Esophagus muscularis mucosa (tissue), 4 donors: ENCODE measurements at regions of chr5 and their contacts with region 1.

Region 1: GRCh38 chr5:111550279-111551020 is 38.1 kb upstream of the STARD4 start:
- DNase-seq: peak; percentile 94
- H3K4me3 ChIP-seq: no peak overlapping the region
- H3K27ac ChIP-seq: peak overlapping the region; percentile 33 to 71 (median 46)
- H3K4me1 ChIP-seq: peaks cover 7 to 21% (median 13%) of the 10 kb centered on the region in 4 donors
- H3K27me3 ChIP-seq: no peaks in the 10 kb centered on the region
- CTCF ChIP-seq: peak; percentile 70 to 72 (median 72)
- EP300 ChIP-seq: no peak
- POLR2A ChIP-seq: no peak

Region 2: GRCh38 chr5:111680737-111681413 is 130.4 kb after region 1 on chr5:
- intact Hi-C with region 1: loop called (anchors 10 kb)
- DNase-seq: peak; percentile 93
- H3K4me3 ChIP-seq: peak overlapping the region in 1 of 4 donors; percentile 4
- H3K27ac ChIP-seq: peak overlapping the region; percentile 41 to 67 (median 58)
- H3K4me1 ChIP-seq: peaks cover 14 to 21% (median 18%) of the 10 kb centered on the region in 4 donors
- H3K27me3 ChIP-seq: no peaks in the 10 kb centered on the region
- CTCF ChIP-seq: no peak
- EP300 ChIP-seq: no peak
- POLR2A ChIP-seq: no peak

Region 3: DNA sequence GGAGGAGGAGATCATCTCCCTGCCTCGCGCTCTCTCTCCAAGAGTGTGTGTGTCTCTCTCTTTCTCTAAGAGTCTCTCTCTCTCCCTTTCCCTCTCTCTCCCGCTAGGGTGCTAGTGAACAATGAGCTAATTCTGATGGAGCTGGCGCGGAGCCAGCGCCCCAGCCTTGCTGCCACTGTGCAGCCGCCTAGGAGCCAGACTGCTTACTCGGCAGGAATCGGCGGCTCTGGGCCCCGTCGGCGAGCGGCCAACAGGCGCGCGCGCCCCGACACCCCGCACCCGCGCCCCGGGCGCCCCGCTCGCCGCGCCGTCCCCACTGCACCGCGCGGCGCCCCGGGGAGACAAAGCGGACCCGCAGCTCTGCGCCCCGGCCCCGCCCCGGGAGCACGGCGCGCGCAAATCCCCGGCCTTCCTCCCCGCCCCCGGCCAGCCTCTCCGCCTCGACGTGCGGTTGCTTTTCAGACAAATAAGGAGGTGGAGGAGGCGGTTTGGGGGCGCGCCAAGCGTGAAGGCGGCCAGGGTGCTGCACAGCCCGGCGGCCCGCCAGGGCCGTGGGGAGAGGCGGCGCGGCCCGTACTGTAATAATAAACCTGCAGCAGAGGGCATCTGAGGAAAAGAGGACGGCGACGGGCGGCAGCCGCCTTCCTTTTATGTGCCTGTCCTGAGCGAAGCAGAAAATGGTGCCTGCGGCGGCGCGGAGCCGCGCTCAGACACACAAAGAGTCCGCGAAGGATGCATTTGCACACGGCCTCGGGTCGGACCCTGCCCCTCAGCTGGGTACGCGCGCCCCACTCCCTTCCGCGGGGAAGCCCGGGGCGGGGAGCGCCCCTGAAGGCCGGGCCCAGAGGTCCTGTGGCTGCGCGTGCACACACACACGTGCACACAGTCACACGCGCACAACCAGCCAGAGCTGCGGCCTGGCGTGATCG is 207.2 kb after region 1 on chr5:
- intact Hi-C with region 1: loop called (anchors 5 kb)
- DNase-seq: peak; percentile 97
- H3K4me3 ChIP-seq: peak overlapping the region; percentile 65 to 71 (median 68)
- H3K27ac ChIP-seq: peak overlapping the region; percentile 88 to 94 (median 90)
- H3K4me1 ChIP-seq: peaks cover 23 to 43% (median 39%) of the 10 kb centered on the region in 4 donors
- H3K27me3 ChIP-seq: no peaks in the 10 kb centered on the region
- CTCF ChIP-seq: peak in 2 of 3 experiments; percentile 14 to 57
- EP300 ChIP-seq: no peak
- POLR2A ChIP-seq: no peak

Region 4: DNA sequence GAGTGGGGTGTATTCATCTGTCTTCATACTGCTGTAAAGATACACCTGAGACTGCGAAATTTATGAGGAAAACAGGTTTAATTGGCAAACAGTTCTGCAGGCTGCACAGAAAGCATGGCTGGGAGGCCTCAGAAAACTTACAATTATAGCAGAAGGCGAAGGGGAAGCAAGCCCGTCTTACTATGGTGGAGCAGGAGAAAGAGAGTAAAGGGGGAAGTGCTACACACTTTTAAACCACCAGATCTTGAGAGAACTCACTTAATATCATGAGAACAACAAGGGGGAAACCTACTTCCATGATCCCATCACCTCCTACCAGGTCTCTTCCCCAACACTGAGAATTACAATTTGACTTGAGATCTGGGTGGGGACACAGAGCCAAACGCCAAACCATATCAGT is 219.1 kb after region 1 on chr5:
- intact Hi-C with region 1: no loop called
- DNase-seq: no peak
- H3K4me3 ChIP-seq: no peak overlapping the region
- H3K27ac ChIP-seq: no peak overlapping the region
- H3K4me1 ChIP-seq: peaks cover 4 to 9% (median 7%) of the 10 kb centered on the region in 4 donors
- H3K27me3 ChIP-seq: no peaks in the 10 kb centered on the region
- CTCF ChIP-seq: no peak
- EP300 ChIP-seq: no peak
- POLR2A ChIP-seq: no peak

Region 5: DNA sequence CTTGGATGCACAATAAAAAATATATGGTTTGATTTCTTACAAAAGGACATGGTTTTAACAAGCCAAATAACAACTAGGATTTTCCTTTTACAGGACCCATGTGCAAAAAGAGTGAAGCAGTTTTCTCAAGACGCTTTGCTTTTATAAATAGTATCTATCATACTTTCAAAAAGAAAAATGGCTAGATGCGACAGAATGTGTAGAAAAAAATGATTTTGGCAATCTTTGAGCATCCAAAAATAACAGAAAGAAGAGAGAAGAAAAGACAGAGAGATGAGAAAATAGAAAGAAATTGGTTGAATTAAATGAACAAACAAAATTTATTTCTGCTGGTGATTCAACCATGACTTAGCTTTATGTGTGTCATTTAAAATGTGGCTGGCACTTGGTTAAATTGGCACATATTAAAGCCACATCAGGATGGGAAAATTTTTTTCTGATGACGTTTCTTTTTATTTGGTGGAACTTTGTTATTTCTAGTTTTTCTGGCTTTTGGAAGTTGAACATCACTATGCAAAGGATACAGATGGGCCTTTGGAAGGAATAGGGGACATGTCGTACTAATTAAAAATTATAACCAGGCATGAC is 242.1 kb after region 1 on chr5:
- intact Hi-C with region 1: no loop called
- DNase-seq: no peak
- H3K4me3 ChIP-seq: no peak overlapping the region
- H3K27ac ChIP-seq: no peak overlapping the region
- H3K4me1 ChIP-seq: no peaks in the 10 kb centered on the region
- H3K27me3 ChIP-seq: no peaks in the 10 kb centered on the region
- CTCF ChIP-seq: no peak
- EP300 ChIP-seq: no peak
- POLR2A ChIP-seq: no peak